ENCODE measurements at regions of chr6 and their contacts with region 1.

Region 1: GRCh38 chr6:30717042-30717844 is at the start of gene MDC1:
- DNase-seq: peak; percentile 95
- CTCF ChIP-seq: no peak

Region 2: GRCh38 chr6:30483677-30484279 is 233.5 kb before region 1 on chr6:
- CTCF ChIA-PET with region 1: interaction called, 11 read pairs
- POLR2A ChIA-PET with region 1: no interaction called
- DNase-seq: peak; percentile 55
- CTCF ChIP-seq: peak; percentile 70

Region 3: DNA sequence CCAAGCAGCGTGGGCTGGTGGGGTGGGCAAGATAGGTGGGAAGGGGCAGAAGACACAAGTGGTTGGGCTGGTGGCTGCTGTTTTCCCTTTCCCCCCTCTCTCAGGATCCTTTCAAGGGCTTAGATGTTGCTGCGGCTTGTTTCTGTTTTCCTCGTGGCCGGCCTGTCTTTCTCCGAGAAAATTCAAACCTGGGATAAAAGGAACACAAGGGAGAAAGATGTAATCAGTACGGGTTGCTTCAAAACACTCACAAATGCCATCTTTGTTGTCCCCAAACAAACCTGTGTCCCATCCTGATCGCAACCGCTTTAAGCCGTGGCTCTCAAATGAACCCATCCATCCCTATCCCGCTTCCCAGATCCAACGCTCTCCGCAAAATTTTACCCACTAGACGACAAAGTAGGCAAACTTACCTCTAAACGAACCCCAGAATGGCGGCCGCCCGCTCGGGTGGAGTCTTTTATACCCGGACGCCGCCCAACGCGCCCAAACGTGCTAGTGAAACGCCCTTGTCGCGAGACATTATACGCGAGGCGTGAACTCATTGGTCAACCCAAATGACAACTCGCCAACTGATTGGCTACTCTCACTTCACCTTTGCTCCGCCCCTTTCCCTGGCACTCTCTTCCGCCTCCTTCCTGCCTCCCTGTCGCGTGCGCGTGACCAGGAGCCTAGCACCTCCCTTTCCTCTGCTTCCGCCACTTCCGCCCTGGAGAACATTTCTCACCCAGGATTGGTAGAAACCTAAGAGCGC is 100.3 kb before region 1 on chr6 and contains the start of gene PPP1R10:
- CTCF ChIA-PET with region 1: interaction called, 11 read pairs
- POLR2A ChIA-PET with region 1: interaction called, 22 read pairs
- DNase-seq: peak; percentile 94
- CTCF ChIP-seq: no peak

Region 4: DNA sequence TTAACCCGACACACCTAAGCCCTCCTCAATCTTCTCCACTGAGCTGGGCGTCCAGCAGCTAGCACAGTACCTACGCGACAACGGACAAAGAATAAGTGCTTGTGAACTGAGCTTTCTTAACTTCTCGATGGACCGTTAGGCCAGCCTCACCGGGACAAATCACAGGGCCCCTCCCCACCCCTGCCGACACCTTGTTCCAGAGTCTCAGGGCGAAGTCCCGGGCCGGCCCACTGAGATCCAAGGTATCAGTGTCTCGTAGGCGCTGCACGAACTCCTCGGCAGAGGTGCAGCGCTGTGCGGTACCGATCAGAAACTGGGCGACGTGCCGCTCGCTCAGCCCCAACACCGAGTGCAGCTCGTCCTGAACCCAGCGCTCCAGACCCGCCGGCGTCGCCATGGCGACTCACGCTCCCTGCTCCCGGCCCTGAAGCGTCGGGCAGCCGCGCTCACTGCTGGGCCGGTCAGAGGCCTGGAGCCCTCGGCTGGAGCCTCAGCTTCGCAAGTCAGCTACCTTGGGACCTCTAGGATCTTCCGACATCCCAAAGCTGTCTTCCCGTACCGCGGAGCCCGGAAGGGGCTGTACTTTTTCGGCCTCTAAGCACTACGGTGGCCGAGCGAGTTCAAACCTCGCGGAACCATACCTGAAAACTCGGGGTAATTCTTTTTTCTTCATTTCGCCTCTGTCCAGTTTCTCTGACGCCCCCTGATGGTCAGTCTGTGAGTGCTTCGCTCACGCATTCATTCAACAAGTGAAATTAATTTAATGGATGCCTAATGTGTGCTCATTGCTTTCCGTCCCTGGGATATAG is 44.6 kb before region 1 on chr6 and contains the start of gene DHX16:
- CTCF ChIA-PET with region 1: interaction called, 776 read pairs
- POLR2A ChIA-PET with region 1: interaction called, 3 read pairs
- DNase-seq: peak; percentile 92
- CTCF ChIP-seq: peak; percentile 91

Region 5: GRCh38 chr6:30730601-30731435 is 13.6 kb after region 1 on chr6:
- CTCF ChIA-PET with region 1: interaction called, 131 read pairs
- POLR2A ChIA-PET with region 1: interaction called, 3 read pairs
- DNase-seq: peak; percentile 78
- CTCF ChIP-seq: peak; percentile 98